ENCODE measurements at regions of chr19 and their contacts with region 1.

Region 1: GRCh38 chr19:41310033-41310758 is at the start of gene CCDC97:
- DNase-seq: peak; percentile 93
- H3K4me3 ChIP-seq: peak within 1 kb of the TSS; percentile 77
- H3K27ac ChIP-seq: peak within 1 kb of the TSS; percentile 68
- H3K4me1 ChIP-seq: peaks cover 44% of the 10 kb centered on the region
- CTCF ChIP-seq: no peak
- total RNA-seq, gene CCDC97: 14.4 and 15.0 TPM in 2 replicates

Region 2: GRCh38 chr19:41206926-41207750 is 103.1 kb before region 1 on chr19:
- CTCF ChIA-PET with region 1: no interaction called
- POLR2A ChIA-PET with region 1: no interaction called
- intact Hi-C with region 1: loop called (anchors 1 kb)
- DNase-seq: no peak
- H3K4me3 ChIP-seq: no peak overlapping the region
- H3K27ac ChIP-seq: no peak overlapping the region
- H3K4me1 ChIP-seq: no peaks in the 10 kb centered on the region
- CTCF ChIP-seq: no peak

Region 3: DNA sequence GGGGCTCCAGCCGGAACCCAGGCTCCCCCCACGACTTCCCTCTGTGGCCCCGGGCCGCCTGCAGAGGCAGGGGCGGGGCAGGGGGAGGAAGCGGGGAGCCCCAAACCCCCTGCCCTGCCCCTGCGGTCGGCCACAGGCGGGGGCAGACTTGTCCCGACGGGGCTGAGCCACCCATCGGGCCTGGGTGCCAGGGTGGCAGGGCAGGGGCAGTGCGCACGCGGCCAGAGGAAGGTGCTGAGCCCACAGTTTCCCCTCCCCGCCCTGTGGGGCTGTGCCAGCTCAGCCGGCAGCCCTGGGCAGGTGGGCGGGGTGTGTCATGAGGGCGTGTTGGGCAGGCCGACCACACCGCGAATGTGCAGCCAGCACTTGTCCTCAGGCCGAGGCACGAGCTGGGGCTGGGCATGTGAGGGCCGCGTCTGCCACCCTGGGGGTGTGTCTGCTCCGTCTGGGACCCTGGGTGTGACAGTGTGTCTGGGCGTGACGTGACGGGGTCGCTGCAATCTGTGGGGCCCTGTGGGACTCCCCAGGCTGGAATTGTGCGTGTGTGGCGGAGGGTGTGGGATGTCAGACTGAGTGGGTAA is 17.5 kb after region 1 on chr19:
- CTCF ChIA-PET with region 1: no interaction called
- POLR2A ChIA-PET with region 1: no interaction called
- intact Hi-C with region 1: loop called (anchors 2 kb)
- DNase-seq: peak; percentile 80
- H3K4me3 ChIP-seq: peak overlapping the region; percentile 61
- H3K27ac ChIP-seq: peak overlapping the region; percentile 79
- H3K4me1 ChIP-seq: peaks cover 53% of the 10 kb centered on the region
- CTCF ChIP-seq: no peak

Region 4: DNA sequence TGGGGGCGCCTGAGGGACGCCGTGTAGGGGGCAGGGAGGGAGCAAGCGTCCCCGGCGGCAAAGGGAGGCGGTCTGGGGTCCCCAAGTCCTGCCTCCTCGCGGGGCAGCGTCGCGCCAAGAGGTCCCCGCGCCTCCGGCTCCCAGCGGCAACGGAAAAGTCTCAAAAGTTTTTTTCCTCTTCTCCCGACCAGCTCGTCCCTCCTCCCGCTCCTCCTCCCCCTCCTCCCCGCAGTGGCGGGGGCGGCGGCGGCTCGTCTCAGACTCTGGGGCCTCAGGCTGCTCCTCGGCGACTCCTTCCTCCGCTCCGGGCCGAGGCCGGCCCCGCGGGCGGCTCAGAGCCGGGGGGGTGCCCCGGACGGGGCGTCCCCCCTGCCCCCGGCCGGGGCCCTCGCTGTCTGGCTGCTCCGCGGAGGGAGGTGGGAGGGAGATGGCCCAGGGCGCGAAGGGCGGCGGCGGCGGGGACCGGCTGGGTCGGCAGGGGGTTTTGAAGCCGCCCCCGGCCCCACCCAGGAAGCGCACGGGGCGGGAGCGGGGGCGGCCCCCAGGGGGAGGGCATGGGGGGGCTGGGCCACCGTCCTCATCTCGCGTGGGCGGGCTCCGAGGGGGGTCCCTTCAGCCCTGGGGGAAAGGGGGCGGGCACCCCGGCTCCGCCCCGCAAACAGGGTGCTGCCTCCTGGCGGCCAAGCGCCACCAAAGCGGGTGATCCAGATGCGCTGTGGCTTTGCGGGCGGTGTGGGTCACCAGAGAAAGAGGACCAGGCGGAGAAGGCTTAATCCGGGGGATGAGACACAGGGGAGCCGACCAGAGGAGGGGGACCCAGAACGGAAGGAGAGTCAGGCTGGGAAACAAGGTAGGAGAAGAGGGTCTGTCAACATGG is 43.5 kb after region 1 on chr19 and contains the start of gene TGFB1:
- CTCF ChIA-PET with region 1: no interaction called
- POLR2A ChIA-PET with region 1: no interaction called
- intact Hi-C with region 1: loop called (anchors 2 kb)
- DNase-seq: peak; percentile 93
- H3K4me3 ChIP-seq: peak within 1 kb of the TSS; percentile 77
- H3K27ac ChIP-seq: peak within 1 kb of the TSS; percentile 54
- H3K4me1 ChIP-seq: peaks cover 21% of the 10 kb centered on the region
- CTCF ChIP-seq: peak; percentile 85
- total RNA-seq, gene TGFB1: 10.9 and 15.5 TPM in 2 replicates